Right ventricle myocardium inferior (tissue), 1 donor: ENCODE measurements at regions of chr5 and their contacts with region 1.

Region 1: GRCh38 chr5:102959055-102959454 is 160.9 kb downstream of the GIN1 start:
- DNase-seq: no peak
- ATAC-seq: no peak

Region 2: GRCh38 chr5:102691434-102691833 is 267.6 kb before region 1 on chr5:
- intact Hi-C with region 1: loop called (anchors 10 kb)
- DNase-seq: no peak
- ATAC-seq: no peak